ENCODE measurements at regions of chr15 and their contacts with region 1.

Region 1: GRCh38 chr15:98311566-98312188 is 336.7 kb upstream of the IGF1R start:
- DNase-seq: peak; percentile 80
- ATAC-seq: no peak
- H3K4me3 Mint-ChIP-seq: no peak overlapping the region
- H3K27ac Mint-ChIP-seq: no peak overlapping the region
- H3K4me1 Mint-ChIP-seq: no peaks in the 10 kb centered on the region
- H3K27me3 Mint-ChIP-seq: peaks cover 3% of the 10 kb centered on the region

Region 2: GRCh38 chr15:98131924-98132323 is 179.8 kb before region 1 on chr15:
- CTCF ChIA-PET with region 1: no interaction called
- DNase-seq: no peak
- ATAC-seq: no peak
- H3K4me3 Mint-ChIP-seq: no peak overlapping the region
- H3K27ac Mint-ChIP-seq: no peak overlapping the region
- H3K4me1 Mint-ChIP-seq: no peaks in the 10 kb centered on the region
- H3K27me3 Mint-ChIP-seq: no peaks in the 10 kb centered on the region

Region 3: GRCh38 chr15:98257290-98257689 is 54.4 kb before region 1 on chr15:
- CTCF ChIA-PET with region 1: no interaction called
- DNase-seq: no peak
- ATAC-seq: no peak
- H3K4me3 Mint-ChIP-seq: no peak overlapping the region
- H3K27ac Mint-ChIP-seq: no peak overlapping the region
- H3K4me1 Mint-ChIP-seq: no peaks in the 10 kb centered on the region
- H3K27me3 Mint-ChIP-seq: no peaks in the 10 kb centered on the region

Region 4: GRCh38 chr15:98421419-98422129 is 109.9 kb after region 1 on chr15:
- CTCF ChIA-PET with region 1: interaction called, 53 read pairs
- DNase-seq: peak; percentile 56
- ATAC-seq: peak; percentile 83
- H3K4me3 Mint-ChIP-seq: no peak overlapping the region
- H3K27ac Mint-ChIP-seq: no peak overlapping the region
- H3K4me1 Mint-ChIP-seq: peaks cover 6% of the 10 kb centered on the region
- H3K27me3 Mint-ChIP-seq: peaks cover 21% of the 10 kb centered on the region

Region 5: DNA sequence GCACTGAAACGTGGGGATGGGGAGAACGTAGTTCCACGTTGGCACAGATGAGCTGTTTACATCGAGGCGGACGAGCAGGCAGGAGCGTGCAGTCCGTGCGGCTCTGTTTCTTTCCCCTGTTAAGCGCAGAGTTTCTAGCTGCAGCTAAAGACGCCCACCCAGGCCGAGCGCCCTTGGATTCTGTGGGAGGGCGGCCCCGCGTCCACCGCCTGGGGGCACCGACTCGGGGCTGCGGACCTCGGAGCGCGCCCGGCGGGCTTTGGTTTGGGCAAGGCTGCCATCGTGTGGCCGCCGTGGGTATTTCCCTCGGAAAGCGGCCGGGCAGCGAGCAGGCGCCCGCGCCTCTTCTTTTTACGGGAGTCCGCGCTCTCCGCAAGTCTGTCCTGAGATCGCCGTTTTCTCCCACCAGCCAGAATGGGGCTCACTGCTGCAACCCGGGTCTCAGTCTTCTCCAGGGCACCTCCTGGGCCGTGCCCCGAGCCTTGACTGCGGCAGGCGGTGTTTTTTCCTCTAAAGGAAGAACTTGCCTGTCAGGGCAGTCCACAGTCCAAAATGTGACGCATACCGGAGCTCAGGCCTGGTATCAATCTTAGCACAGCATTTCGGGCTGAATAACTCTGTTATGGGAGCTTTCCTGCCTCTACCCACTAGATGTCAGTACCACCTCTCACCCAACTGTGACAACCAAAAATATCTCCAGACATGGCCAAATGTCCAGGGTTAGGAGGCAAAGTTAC is 116.7 kb after region 1 on chr15:
- CTCF ChIA-PET with region 1: interaction called, 53 read pairs
- DNase-seq: peak; percentile 56
- ATAC-seq: peak; percentile 83
- H3K4me3 Mint-ChIP-seq: peak overlapping the region; percentile 20
- H3K27ac Mint-ChIP-seq: no peak overlapping the region
- H3K4me1 Mint-ChIP-seq: peaks cover 5% of the 10 kb centered on the region
- H3K27me3 Mint-ChIP-seq: peaks cover 14% of the 10 kb centered on the region